Panc1 (cell line): ENCODE measurements at regions of chr12 and their contacts with region 1.

Region 1: GRCh38 chr12:64568288-64568687 is 42.0 kb upstream of the RASSF3 start:
- DNase-seq: no peak
- ATAC-seq: no peak
- H3K4me3 ChIP-seq: no peak overlapping the region
- H3K27ac ChIP-seq: no peak overlapping the region
- H3K4me1 ChIP-seq: no peaks in the 10 kb centered on the region
- H3K27me3 ChIP-seq: no peaks in the 10 kb centered on the region
- CTCF ChIP-seq: no peak

Region 2: GRCh38 chr12:64590183-64590582 is 21.9 kb after region 1 on chr12:
- CTCF ChIA-PET with region 1: no interaction called
- POLR2A ChIA-PET with region 1: interaction called, 13 read pairs
- in situ Hi-C with region 1: no loop called
- intact Hi-C with region 1: no loop called
- DNase-seq: no peak
- ATAC-seq: no peak
- H3K4me3 ChIP-seq: no peak overlapping the region
- H3K27ac ChIP-seq: no peak overlapping the region
- H3K4me1 ChIP-seq: no peaks in the 10 kb centered on the region
- H3K27me3 ChIP-seq: no peaks in the 10 kb centered on the region
- CTCF ChIP-seq: no peak